ENCODE measurements at regions of chr15 and their contacts with region 1.

Region 1: DNA sequence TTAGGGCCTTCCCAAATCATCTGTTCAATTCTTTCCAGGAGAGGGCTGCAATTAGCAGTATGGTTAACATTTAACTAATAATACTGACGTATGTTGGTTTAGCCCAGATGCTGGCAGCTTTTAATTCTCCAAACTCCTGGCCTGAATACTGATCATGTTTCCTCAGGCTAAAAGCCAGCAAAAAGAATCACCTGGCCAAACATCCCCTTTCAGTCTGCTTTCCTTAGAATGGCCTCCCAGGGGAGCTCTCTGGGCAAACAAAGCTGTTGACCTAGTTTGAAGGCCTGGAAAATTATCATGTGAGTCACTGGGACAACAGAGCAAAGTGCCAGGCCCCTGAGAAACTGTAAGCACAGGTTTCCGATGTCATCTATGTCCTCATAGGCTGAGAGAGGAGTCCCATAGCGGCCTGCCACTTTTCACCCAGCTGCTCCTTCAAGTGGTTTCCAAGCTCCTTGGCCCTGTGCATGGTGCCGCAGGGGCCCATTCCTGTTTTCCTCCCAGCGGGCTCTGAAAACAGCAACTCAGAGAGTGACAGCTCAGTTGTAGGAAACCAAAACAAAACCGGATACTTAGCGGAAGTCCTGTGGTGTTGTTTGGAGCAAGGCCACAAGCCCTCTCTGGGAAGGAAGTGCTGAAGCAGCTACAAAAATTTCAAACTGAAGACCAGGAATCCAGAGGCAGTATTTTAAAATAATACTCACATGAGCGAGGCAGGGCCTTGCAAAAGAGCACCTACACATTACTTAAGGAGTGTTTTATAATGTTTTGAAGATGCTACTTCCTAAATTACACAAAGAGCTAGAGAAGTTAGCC is 36.5 kb upstream of the RAB11A start:
- DNase-seq: peak; percentile 12 to 81 (median 55)
- ATAC-seq: peak; percentile 40
- H3K4me3 ChIP-seq: peak overlapping the region; percentile 2 to 18
- H3K4me3 Mint-ChIP-seq: peak overlapping the region; percentile 75
- H3K27ac ChIP-seq: peak overlapping the region; percentile 39 to 89
- H3K27ac Mint-ChIP-seq: peak overlapping the region; percentile 94
- H3K4me1 ChIP-seq: peaks cover 52% of the 10 kb centered on the region
- H3K4me1 Mint-ChIP-seq: peaks cover 57% of the 10 kb centered on the region
- H3K27me3 ChIP-seq: no peaks in the 10 kb centered on the region
- H3K27me3 Mint-ChIP-seq: no peaks in the 10 kb centered on the region
- CTCF ChIP-seq: no peak

Region 2: DNA sequence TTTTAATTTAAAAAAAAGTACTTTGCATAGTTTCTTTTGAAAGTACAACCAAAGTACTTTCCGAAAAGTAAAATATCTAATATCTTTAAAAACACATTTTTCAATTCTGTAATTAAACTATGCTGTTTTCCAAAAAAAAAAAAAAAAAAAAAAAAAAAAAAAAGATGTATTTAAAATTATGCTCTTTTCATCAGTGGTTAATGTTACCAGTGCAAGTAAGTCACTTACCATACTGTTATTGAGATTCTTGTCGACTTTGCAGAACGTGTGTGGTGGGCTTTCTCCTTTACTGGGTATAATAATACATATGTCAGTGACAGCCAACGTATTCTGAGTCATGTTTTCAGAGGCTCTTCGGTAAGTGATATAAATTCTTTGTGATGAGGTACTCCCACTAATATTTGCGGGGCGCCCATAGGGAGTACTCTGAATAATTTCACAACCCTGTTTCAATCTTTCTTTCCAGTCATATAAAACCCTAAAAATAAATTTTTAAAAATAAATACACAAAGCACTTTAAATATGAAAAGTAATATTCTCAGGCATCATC is 80.5 kb before region 1 on chr15:
- CTCF ChIA-PET with region 1: interaction called, 8 read pairs
- POLR2A ChIA-PET with region 1: no interaction called
- intact Hi-C with region 1: loop called in 1 of 2 experiments (anchors 10 kb)
- DNase-seq: no peak
- ATAC-seq: no peak
- H3K4me3 ChIP-seq: no peak overlapping the region
- H3K4me3 Mint-ChIP-seq: no peak overlapping the region
- H3K27ac ChIP-seq: no peak overlapping the region
- H3K27ac Mint-ChIP-seq: no peak overlapping the region
- H3K4me1 ChIP-seq: no peaks in the 10 kb centered on the region
- H3K4me1 Mint-ChIP-seq: peaks cover 28% of the 10 kb centered on the region
- H3K27me3 ChIP-seq: no peaks in the 10 kb centered on the region
- H3K27me3 Mint-ChIP-seq: no peaks in the 10 kb centered on the region
- CTCF ChIP-seq: no peak

Region 3: GRCh38 chr15:65818927-65819562 is 13.7 kb before region 1 on chr15:
- CTCF ChIA-PET with region 1: interaction called, 7 read pairs
- POLR2A ChIA-PET with region 1: interaction called, 8 read pairs
- intact Hi-C with region 1: loop called (anchors 1 kb)
- DNase-seq: peak in 2 of 9 experiments; percentile 86 to 94
- ATAC-seq: peak; percentile 90
- H3K4me3 ChIP-seq: peak overlapping the region in 1 of 2 experiments; percentile 2
- H3K4me3 Mint-ChIP-seq: peak overlapping the region; percentile 59
- H3K27ac ChIP-seq: peak overlapping the region; percentile 84 to 88
- H3K27ac Mint-ChIP-seq: peak overlapping the region; percentile 92
- H3K4me1 ChIP-seq: peaks cover 39% of the 10 kb centered on the region
- H3K4me1 Mint-ChIP-seq: peaks cover 49% of the 10 kb centered on the region
- H3K27me3 ChIP-seq: no peaks in the 10 kb centered on the region
- H3K27me3 Mint-ChIP-seq: no peaks in the 10 kb centered on the region
- CTCF ChIP-seq: no peak

Region 4: GRCh38 chr15:65980824-65981456 is 148.2 kb after region 1 on chr15:
- CTCF ChIA-PET with region 1: no interaction called
- POLR2A ChIA-PET with region 1: no interaction called
- intact Hi-C with region 1: no loop called
- DNase-seq: peak in 3 of 9 experiments; percentile 8 to 29 (median 17)
- ATAC-seq: no peak
- H3K4me3 ChIP-seq: no peak overlapping the region
- H3K4me3 Mint-ChIP-seq: peak overlapping the region; percentile 54
- H3K27ac ChIP-seq: no peak overlapping the region
- H3K27ac Mint-ChIP-seq: no peak overlapping the region
- H3K4me1 ChIP-seq: peaks cover 9% of the 10 kb centered on the region
- H3K4me1 Mint-ChIP-seq: peaks cover 10% of the 10 kb centered on the region
- H3K27me3 ChIP-seq: peaks cover 0 to 10% of the 10 kb centered on the region in 2 experiments
- H3K27me3 Mint-ChIP-seq: peaks cover 16% of the 10 kb centered on the region
- CTCF ChIP-seq: no peak